Sciatic nerve (tissue), 2 donors: ENCODE measurements at regions of chr9 and their contacts with region 1.

Region 1: GRCh38 chr9:21812946-21813568 is 10.6 kb downstream of the MTAP start:
- DNase-seq: peak; percentile 82
- ATAC-seq: peak; percentile 86

Region 2: DNA sequence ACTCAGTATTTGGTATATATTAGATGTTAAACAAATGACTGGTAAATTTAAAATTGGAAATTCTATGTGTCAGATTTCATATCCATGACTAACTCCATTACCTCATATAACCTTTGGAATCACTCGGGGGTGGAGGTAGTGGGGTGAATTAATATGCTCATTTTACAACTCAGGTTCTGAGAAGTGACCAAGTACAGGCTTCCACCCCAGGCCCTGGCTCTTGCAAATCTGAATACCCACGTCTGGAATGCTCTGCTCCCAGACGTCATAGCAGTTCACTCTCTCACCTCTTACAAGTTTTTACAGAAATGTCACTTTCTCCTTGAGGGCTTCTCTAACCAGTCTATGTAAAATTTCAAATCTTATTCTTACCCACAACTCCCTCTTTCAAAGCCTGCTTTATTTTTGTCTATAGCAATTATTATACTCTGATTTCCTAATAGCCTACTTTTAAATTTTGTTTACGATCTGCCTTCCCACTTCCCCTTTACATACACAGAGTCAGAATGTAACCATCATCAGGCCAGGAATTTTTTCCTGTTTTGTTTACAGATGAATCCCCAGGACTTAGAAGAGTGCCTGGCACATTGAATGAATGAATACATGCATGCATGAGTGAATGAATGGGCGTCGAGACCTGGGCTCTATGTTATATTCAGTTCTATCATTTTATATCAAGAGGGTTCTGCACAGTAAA is 196.8 kb before region 1 on chr9:
- intact Hi-C with region 1: no loop called
- DNase-seq: no peak
- ATAC-seq: no peak

Region 3: GRCh38 chr9:22010866-22011625 is 198.0 kb after region 1 on chr9:
- intact Hi-C with region 1: loop called (anchors 10 kb)
- DNase-seq: peak; percentile 60
- ATAC-seq: no peak

Region 4: DNA sequence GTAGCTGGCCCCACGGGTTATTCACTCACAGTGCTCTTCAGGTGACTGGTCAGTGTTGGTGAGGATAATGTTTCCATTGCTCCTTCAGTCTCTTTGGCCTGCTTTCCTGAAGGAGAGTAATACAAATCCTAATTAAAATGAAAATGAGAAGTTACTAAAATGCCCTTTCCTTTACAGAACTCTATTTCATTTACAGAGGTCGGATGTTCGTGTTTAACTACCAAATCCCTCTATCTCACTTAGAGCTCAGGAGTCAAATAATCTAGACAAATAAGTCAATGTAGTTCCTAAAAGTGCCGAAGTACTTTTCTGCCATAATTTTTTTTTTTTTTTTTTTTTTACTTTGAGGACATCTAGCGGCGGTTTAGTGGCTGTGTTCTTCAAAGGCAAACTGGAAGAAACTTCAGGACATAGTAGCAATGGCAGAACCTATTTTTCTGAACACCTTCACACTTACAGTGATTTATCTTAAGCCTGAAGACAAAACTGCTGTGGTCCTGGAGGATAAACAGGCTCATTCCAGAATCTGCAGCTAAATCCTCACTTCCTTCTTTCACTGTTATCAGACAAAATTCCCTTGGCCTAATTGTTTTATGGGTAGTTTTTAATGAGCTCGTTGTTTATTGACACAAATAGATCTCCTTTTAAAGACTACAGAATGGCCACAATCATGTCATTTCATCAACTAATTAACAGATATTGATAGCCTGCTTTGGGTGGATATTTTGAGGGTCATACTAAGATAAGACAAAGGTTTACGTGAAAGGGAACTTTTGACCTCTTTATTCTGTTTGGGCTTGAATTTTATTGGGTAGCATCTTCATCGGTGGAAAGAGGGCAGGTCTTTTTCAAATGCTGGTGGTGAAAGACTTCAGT is 426.0 kb after region 1 on chr9:
- intact Hi-C with region 1: loop called (anchors 10 kb)
- DNase-seq: no peak
- ATAC-seq: peak; percentile 55